ENCODE measurements at regions of chr22 and their contacts with region 1.

Region 1: DNA sequence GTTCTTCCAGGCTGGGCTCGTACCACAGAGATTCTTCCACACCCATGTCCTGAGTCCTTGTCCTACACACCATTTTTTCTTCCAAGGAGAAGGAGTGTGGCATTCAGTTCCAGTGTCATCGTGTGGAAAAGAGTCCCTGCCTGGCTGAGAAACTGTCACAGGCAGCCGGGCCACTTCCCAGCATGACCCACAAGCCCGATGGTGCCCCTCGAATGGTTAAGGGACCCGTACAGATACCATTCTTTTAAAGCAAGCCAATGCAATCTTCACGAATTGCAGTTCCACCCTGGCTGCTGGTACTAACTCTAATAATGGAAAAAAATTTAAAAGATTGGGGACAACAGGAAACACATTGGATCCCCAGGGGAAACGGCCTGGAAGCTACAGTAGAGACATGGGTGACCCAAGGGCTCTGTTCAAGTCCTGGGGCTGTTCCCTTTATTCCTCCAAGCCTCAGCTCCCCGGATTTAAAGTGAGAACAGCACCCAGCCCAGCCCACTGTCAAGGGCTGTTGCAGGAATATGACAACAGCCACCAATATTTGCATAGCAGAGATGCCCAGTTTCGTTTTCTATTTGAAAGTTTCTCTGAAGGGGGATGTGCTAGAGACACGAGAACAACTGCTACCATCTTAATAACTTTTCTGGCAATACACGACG is 80.9 kb upstream of the WNT7B start:
- DNase-seq: peak in 3 of 9 experiments; percentile 27 to 61 (median 44)
- ATAC-seq: peak; percentile 55
- H3K4me3 ChIP-seq: no peak overlapping the region
- H3K4me3 Mint-ChIP-seq: peak overlapping the region; percentile 54
- H3K27ac ChIP-seq: peak overlapping the region in 1 of 2 experiments; percentile 45
- H3K27ac Mint-ChIP-seq: peak overlapping the region; percentile 86
- H3K4me1 ChIP-seq: peaks cover 35% of the 10 kb centered on the region
- H3K4me1 Mint-ChIP-seq: peaks cover 38% of the 10 kb centered on the region
- H3K27me3 ChIP-seq: no peaks in the 10 kb centered on the region
- H3K27me3 Mint-ChIP-seq: peaks cover 7% of the 10 kb centered on the region
- CTCF ChIP-seq: no peak

Region 2: GRCh38 chr22:46044621-46045438 is 13.1 kb before region 1 on chr22:
- CTCF ChIA-PET with region 1: no interaction called
- POLR2A ChIA-PET with region 1: interaction called, 25 read pairs
- intact Hi-C with region 1: loop called in 1 of 2 experiments (anchors 1 kb)
- DNase-seq: peak in 5 of 9 experiments; percentile 46 to 74 (median 58)
- ATAC-seq: peak; percentile 73
- H3K4me3 ChIP-seq: peak overlapping the region; percentile 53 to 54
- H3K4me3 Mint-ChIP-seq: peak overlapping the region; percentile 86
- H3K27ac ChIP-seq: peak overlapping the region; percentile 29 to 31
- H3K27ac Mint-ChIP-seq: peak overlapping the region; percentile 90
- H3K4me1 ChIP-seq: peaks cover 21% of the 10 kb centered on the region
- H3K4me1 Mint-ChIP-seq: peaks cover 21% of the 10 kb centered on the region
- H3K27me3 ChIP-seq: no peaks in the 10 kb centered on the region
- H3K27me3 Mint-ChIP-seq: no peaks in the 10 kb centered on the region
- CTCF ChIP-seq: no peak

Region 3: DNA sequence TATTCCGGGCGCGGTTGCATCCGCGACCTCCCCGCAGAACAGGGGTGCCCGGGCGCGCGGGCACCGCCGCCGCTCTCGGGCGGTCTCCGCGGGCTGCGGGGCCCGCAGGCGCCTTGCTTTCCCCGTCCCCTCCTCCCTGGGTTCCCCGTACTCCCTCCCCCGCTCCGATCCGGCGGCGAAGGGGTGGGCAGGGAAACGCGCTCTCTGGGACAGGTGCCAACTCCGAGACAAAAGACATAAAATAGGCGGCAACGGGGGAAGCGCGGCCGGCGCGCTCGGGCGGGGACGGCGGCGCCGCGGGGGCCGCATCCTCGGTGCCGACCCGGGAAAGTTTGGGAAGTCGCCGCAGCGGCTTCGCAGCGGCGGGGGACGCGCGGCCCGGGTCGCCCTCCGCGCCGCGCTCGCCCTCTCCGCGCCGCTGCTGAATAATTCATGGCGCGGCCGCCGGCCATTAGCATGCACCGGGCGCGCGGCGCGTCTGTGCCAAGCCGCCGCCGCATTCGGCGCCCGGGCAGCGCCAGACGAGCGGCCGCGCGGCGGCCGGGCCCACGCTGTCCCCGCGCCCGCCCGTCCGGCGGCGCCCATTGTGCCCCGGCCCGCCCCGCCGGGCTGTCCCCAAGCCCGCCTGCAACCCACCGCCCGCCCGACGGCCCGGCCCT is 13.7 kb after region 1 on chr22:
- CTCF ChIA-PET with region 1: no interaction called
- POLR2A ChIA-PET with region 1: interaction called, 5 read pairs
- intact Hi-C with region 1: loop called (anchors 1 kb)
- DNase-seq: peak in 7 of 9 experiments; percentile 31 to 62 (median 51)
- ATAC-seq: peak; percentile 21
- H3K4me3 ChIP-seq: peak overlapping the region; percentile 32 to 50
- H3K4me3 Mint-ChIP-seq: peak overlapping the region; percentile 82
- H3K27ac ChIP-seq: no peak overlapping the region
- H3K27ac Mint-ChIP-seq: peak overlapping the region; percentile 67
- H3K4me1 ChIP-seq: peaks cover 34% of the 10 kb centered on the region
- H3K4me1 Mint-ChIP-seq: peaks cover 42% of the 10 kb centered on the region
- H3K27me3 ChIP-seq: no peaks in the 10 kb centered on the region
- H3K27me3 Mint-ChIP-seq: no peaks in the 10 kb centered on the region
- CTCF ChIP-seq: no peak

Region 4: DNA sequence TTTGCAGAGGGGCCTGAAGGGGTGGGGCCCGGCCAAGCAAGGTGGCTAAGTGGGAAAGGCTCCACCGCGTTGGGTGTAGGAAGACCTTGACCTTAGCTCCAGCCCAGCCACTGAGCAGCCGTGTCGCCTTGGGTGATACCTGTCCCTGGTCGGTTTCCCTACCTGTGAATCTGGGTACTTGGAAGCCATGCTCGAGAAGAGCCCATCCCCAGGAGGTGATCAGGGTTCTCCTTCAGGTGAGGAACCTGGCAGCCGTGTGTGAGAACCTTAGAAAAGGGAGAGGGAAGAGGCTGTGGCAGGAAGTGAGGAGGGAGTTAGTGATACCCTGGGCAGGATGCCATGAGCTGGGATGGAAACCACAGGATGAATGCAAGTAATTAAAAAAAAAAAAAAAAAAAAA is 114.0 kb after region 1 on chr22:
- CTCF ChIA-PET with region 1: no interaction called
- POLR2A ChIA-PET with region 1: no interaction called
- intact Hi-C with region 1: no loop called
- DNase-seq: no peak
- ATAC-seq: no peak
- H3K4me3 ChIP-seq: no peak overlapping the region
- H3K4me3 Mint-ChIP-seq: no peak overlapping the region
- H3K27ac ChIP-seq: no peak overlapping the region
- H3K27ac Mint-ChIP-seq: no peak overlapping the region
- H3K4me1 ChIP-seq: peaks cover 6% of the 10 kb centered on the region
- H3K4me1 Mint-ChIP-seq: peaks cover 25% of the 10 kb centered on the region
- H3K27me3 ChIP-seq: no peaks in the 10 kb centered on the region
- H3K27me3 Mint-ChIP-seq: no peaks in the 10 kb centered on the region
- CTCF ChIP-seq: no peak